ENCODE measurements at regions of chr20 and their contacts with region 1.

Region 1: DNA sequence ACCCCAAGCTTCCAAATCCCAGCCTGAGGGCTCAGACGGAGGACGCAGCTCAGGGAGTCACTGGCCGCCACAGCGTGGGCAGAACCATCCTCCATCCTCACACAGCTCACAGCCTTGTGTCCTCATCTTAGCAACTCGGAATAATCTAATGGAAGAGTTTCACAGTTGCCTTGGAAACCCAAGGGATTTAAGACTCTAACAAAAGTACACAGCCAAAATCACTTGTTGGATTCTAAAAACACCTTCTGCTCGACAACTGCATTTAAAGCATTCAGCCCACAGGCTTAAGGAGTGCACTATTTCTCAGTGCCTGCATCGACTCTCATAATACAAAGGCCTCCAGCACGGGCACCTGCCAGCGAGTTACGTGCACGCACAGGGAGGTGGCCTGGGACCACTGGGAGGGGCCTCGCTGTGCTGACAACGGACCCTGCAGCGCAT is 45.4 kb downstream of the ZBTB46 start:
- DNase-seq: no peak
- H3K4me3 ChIP-seq: no peak overlapping the region
- H3K27ac ChIP-seq: no peak overlapping the region
- H3K4me1 ChIP-seq: no peaks in the 10 kb centered on the region
- H3K27me3 ChIP-seq: no peaks in the 10 kb centered on the region
- CTCF ChIP-seq: no peak
- EP300 ChIP-seq: no peak
- RAD21 ChIP-seq: no peak

Region 2: DNA sequence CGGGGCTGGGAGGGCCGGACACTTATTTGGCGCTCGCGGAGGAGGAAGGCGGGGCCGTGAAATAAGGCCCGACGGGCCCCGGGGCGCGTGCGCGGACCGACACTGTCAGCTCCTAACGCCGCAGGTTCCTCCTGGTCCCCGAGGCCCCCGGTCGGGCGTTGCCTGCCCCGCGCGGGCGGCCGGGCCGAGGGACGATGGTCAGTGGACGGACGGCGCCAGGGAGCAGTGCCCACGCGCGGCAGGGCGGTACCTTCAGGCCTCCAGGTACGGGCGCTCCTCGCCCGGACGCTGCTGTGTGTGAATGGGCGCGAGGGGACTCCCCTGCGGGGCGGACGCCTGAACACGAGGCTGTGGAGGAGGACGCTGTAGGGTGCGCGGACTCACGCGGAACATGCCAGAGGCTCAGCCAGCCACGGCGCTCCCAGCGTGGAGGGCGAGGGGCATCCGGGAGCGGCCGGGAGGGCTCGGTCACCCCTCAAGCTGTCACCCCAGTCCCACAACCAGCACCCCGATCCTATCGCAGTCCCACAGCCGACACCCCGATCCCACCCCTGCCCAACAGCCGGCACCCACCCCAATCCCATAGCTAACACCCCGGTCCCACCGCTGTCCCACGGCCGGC is 158.5 kb before region 1 on chr20:
- CTCF ChIA-PET with region 1: no interaction called
- POLR2A ChIA-PET with region 1: no interaction called
- DNase-seq: peak; percentile 99
- H3K4me3 ChIP-seq: peak overlapping the region; percentile 76 to 93
- H3K27ac ChIP-seq: peak overlapping the region; percentile 58 to 66; a peak in 3 of 4 replicates
- H3K4me1 ChIP-seq: peaks cover 6 to 8% of the 10 kb centered on the region in 2 experiments; a peak in 2 of 4 replicates
- H3K27me3 ChIP-seq: no peaks in the 10 kb centered on the region
- CTCF ChIP-seq: no peak
- EP300 ChIP-seq: no peak
- RAD21 ChIP-seq: no peak

Region 3: DNA sequence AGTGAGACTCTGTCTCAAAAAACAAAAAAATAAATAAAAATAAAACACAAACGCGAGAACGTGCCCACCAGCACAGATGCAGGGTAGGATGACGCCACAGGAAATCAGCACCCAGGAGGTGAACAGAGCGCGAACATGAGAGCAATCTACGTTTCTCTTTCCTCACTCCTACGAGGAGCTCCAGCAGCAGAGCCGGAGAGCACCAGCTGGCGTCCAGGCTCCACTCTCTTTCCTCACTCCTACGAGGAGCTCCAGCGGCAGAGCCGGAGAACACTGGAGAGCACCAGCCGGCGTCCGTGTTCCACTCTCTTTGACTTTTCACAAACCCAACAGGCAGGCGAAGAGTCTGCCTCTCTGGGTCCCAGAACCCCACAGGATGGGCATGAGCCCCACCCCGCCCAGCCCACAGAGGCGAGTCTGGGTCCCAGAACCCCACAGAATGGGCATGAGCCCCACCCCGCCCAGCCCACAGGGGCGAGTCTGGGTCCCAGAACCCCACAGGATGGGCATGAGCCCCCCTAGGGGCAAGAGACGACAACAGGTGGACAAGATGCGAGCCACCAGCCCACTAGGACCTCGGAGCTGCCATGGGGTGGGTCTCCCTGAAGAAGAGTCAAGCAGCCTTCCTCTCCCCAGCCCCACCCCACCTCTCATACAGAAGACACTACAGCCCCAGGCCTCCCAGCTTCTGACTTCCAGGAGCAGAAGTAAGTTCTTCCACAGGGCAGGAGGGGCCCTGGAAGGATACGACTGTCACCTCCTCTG is 25.2 kb after region 1 on chr20:
- CTCF ChIA-PET with region 1: interaction called, 19 read pairs
- POLR2A ChIA-PET with region 1: no interaction called
- DNase-seq: no peak
- H3K4me3 ChIP-seq: no peak overlapping the region
- H3K27ac ChIP-seq: no peak overlapping the region
- H3K4me1 ChIP-seq: no peaks in the 10 kb centered on the region
- H3K27me3 ChIP-seq: no peaks in the 10 kb centered on the region
- CTCF ChIP-seq: no peak
- EP300 ChIP-seq: no peak
- RAD21 ChIP-seq: no peak

Region 4: GRCh38 chr20:63858393-63859165 is 72.9 kb after region 1 on chr20:
- CTCF ChIA-PET with region 1: interaction called, 19 read pairs
- POLR2A ChIA-PET with region 1: no interaction called
- DNase-seq: peak; percentile 70
- H3K4me3 ChIP-seq: no peak overlapping the region
- H3K27ac ChIP-seq: peak overlapping the region in 1 of 2 experiments; percentile 76; a peak in 2 of 4 replicates
- H3K4me1 ChIP-seq: peaks cover 0 to 53% of the 10 kb centered on the region in 2 experiments; a peak in 1 of 4 replicates
- H3K27me3 ChIP-seq: no peaks in the 10 kb centered on the region
- CTCF ChIP-seq: no peak
- EP300 ChIP-seq: no peak
- RAD21 ChIP-seq: peak; percentile 42; the same call in 1 of the 2 replicates

Region 5: DNA sequence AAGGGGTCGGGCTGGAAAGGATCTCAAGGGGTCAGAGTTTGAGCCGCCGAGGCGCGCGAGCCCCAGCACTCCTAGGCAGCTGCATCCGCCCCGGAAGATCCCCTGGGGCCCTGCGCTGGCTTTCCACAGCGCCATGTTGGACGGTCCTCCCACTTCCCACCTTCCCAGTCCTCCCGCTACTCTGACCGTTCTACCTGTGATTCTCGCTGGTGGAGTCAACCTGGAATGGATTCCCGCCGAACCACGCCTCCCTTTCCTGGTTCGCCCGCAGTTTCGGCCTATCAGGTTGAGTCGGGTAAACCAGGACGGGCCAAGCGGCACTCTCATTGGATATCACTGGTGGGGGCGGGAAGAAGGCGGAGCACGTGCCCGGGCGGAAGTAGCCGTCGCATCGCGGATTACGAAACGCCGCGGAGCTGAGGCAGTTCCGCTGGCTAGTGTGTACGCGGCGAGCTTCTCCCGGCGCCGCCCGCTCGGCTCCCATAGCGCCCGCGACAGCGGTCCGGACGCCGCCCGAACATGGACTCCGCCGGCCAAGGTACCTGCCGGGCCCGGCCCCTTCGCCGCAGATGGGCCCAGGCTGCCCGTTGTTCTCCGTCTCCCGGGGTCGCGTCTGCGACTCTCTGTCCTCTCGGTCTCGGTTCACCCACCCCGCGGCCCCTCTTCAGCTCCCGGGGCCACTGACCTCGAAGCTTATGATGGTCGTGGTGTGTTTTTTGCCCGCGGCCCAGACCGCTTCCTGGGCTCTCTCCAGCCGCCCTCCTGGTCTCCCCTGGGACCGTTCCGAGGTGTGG is 79.3 kb after region 1 on chr20 and contains the start of gene TPD52L2:
- CTCF ChIA-PET with region 1: interaction called, 19 read pairs
- POLR2A ChIA-PET with region 1: no interaction called
- DNase-seq: peak; percentile 98
- H3K4me3 ChIP-seq: peak within 1 kb of the TSS; percentile 78 to 97
- H3K27ac ChIP-seq: peak within 1 kb of the TSS; percentile 78 to 84
- H3K4me1 ChIP-seq: peaks cover 0 to 11% of the 10 kb centered on the region in 2 experiments; a peak in 1 of 4 replicates
- H3K27me3 ChIP-seq: no peaks in the 10 kb centered on the region
- CTCF ChIP-seq: no peak
- EP300 ChIP-seq: no peak
- RAD21 ChIP-seq: no peak
- polyA plus RNA-seq, gene TPD52L2: 137 and 161 TPM in 2 replicates

Measured in SK-N-SH (cell line).